Right cardiac atrium (tissue), 5 donors: ENCODE measurements at regions of chr1 and their contacts with region 1.

Region 1: DNA sequence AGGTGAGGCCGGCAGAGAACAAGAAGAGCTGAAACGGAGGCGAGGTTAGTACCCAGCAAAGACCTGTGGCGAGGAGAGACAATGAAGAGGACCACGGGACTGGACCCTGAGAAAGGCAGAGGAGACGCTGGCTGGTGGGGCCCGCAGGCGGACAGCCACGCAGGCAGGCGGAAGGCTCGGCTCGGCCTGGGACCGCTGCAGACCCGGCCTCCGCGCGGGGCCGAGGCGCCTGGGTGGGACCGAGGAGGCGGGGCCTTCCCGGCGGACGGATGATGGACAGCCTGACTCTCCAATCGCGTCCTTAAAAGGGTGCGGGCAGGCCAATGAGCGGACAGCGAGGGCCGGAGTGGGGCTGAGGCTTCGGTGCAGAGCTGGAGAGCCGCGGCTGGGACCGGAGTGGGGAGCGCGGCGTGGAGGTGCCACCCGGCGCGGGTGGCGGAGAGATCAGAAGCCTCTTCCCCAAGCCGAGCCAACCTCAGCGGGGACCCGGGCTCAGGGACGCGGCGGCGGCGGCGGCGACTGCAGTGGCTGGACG is at the start of gene MPZL1:
- DNase-seq: peak; percentile 96 to 98 (median 98)
- ATAC-seq: peak; percentile 99
- H3K4me3 ChIP-seq: peak within 1 kb of the TSS; percentile 72
- H3K27ac ChIP-seq: peak within 1 kb of the TSS; percentile 80
- H3K4me1 ChIP-seq: peaks cover 10% of the 10 kb centered on the region
- H3K27me3 ChIP-seq: no peaks in the 10 kb centered on the region
- total RNA-seq, gene MPZL1: 36.3 to 73.7 (median 61.1) TPM

Region 2: GRCh38 chr1:167797015-167797414 is 75.3 kb after region 1 on chr1:
- intact Hi-C with region 1: loop called in 3 of 4 experiments (anchors 5 kb)
- DNase-seq: peak; percentile 81 to 89 (median 84)
- ATAC-seq: peak; percentile 98 to 99
- H3K4me3 ChIP-seq: no peak overlapping the region
- H3K27ac ChIP-seq: peak overlapping the region; percentile 91
- H3K4me1 ChIP-seq: no peaks in the 10 kb centered on the region
- H3K27me3 ChIP-seq: no peaks in the 10 kb centered on the region

Region 3: GRCh38 chr1:167803358-167804207 is 81.9 kb after region 1 on chr1:
- intact Hi-C with region 1: loop called in 3 of 4 experiments (anchors 5 kb)
- DNase-seq: peak; percentile 94 to 96 (median 95)
- ATAC-seq: peak; percentile 94 to 96
- H3K4me3 ChIP-seq: no peak overlapping the region
- H3K27ac ChIP-seq: no peak overlapping the region
- H3K4me1 ChIP-seq: no peaks in the 10 kb centered on the region
- H3K27me3 ChIP-seq: no peaks in the 10 kb centered on the region

Region 4: DNA sequence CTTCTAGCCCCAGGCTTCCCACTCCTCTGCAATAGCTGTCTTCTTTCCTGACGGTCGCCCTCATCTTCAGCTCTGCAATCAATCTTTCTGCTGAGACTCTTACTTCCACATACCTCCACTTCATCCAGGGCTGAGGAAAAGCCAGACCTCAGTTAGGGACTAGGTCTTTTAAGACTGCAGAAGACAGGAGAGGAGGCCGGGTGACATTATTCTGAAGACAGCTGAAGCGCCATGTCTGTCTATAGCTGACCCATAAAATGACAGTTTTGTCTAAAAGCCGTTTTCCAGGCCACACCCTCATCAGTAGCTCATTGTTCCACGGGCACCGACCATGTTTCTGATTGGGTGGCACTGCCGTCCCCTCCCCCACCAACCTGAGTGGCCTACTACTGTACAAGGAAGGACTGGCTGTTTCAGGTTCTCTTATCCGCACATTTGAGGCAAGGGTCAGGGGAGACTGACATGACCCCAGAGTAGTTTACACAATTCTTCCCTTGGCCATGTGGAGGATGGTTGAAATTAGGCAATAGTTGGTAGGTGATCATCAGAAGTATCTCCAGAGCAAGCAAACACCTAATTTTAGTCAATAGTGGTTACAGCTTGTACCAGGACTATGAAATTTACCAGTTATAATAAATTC is 192.3 kb after region 1 on chr1 and contains the start of gene ADCY10:
- intact Hi-C with region 1: no loop called
- DNase-seq: no peak
- ATAC-seq: no peak
- H3K4me3 ChIP-seq: no peak within 1 kb of the TSS
- H3K27ac ChIP-seq: no peak within 1 kb of the TSS
- H3K4me1 ChIP-seq: peaks cover 2% of the 10 kb centered on the region
- H3K27me3 ChIP-seq: no peaks in the 10 kb centered on the region
- total RNA-seq, gene ADCY10: 0.09 to 0.50 (median 0.33) TPM

Region 5: DNA sequence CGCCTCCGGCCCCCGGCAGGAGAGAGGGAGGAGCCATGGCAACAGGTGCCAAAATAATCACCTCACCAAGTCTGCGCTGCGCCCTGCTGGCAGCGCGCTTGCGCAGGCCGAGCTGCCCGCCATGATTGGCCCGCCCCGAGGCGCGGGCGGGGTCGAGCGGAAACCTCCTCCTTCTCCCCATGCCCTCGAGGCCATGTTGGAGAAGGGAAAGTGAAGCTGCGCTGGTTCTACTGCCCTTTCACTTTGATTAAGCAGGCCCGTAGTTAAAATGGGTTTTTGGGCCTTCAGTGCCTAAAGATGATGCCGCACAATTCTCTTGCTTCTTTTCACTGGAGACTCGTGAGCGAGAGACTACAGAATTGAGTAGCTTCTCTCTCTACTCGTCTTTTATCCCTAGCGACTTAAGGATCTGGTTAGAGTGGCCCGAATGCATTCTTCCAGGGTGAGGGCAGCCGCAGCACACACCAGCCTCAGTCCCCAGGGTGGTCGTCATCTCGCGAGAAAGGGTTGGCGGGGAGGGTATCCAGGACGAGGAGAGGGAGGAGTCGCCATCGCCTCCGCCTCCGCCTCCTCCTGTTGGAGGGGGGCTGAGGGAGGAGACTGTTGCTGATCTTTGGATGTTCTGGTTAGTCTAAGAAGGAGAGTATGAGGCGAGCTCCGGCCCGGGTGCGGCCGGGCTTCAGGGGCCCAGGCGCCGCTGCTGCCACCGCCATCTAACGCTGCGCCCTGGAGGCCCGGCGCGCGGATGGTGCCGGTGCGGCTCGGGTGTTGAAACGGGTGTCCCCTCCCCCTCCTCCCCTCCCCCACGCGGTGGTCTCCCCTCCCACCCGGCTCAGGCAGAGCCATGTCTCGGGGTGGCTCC is 214.6 kb after region 1 on chr1 and contains the start of gene DCAF6:
- intact Hi-C with region 1: loop called in 2 of 4 experiments (anchors 5 to 10 kb)
- DNase-seq: peak; percentile 97 to 99 (median 99)
- ATAC-seq: peak; percentile 95 to 96
- H3K4me3 ChIP-seq: peak within 1 kb of the TSS; percentile 85
- H3K27ac ChIP-seq: peak within 1 kb of the TSS; percentile 90
- H3K4me1 ChIP-seq: no peaks in the 10 kb centered on the region
- H3K27me3 ChIP-seq: no peaks in the 10 kb centered on the region
- total RNA-seq, gene DCAF6: 157 to 192 (median 182) TPM